CD8-positive, alpha-beta memory T cell (primary cell): ENCODE measurements at regions of chr11 and their contacts with region 1.

Region 1: DNA sequence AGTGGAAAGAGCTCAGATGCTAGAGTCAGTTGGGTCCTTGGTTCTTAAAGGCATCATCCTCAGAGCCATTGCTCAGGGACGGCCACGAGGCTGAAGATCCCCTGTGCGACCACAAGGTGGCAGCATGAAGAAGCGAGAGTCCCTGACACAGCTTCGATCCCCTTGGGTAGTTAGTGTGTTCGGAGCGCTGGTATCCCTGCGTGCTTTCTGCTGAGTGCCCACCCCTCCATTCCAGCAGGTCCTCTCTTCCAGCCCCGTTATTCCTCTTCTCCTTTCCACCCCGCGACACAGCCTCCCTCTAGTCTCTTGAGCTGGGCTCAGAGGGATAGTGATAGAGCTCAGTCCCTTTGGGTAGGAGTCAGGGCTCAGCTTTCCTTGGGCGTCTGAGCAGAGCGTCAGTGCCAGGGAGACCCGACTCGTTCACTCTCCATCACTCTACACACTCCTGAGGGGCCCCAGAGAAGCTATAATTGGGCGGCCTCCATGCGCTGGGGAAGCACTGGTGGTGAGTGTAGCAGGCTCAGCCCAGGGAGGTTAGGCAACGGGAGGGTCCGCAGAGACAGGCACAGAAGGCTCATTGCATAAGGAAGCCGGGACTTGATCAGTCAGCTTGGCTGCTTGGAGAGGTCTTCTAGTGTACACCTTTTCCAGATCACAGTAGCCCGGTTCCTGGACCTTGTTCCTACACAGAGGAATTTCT is at the start of gene OR51D1:
- DNase-seq: peak; percentile 39 to 79 (median 52)
- H3K4me3 ChIP-seq: no peak within 1 kb of the TSS
- H3K4me3 Mint-ChIP-seq: no peak within 1 kb of the TSS
- H3K27ac ChIP-seq: no peak within 1 kb of the TSS
- H3K27ac Mint-ChIP-seq: no peak within 1 kb of the TSS
- H3K4me1 ChIP-seq: no peaks in the 10 kb centered on the region
- H3K4me1 Mint-ChIP-seq: no peaks in the 10 kb centered on the region
- H3K27me3 ChIP-seq: no peaks in the 10 kb centered on the region
- H3K27me3 Mint-ChIP-seq: peaks cover 0 to 14% of the 10 kb centered on the region in 2 donors
- total RNA-seq, gene OR51D1: not detected

Region 2: GRCh38 chr11:4626207-4627099 is 10.7 kb before region 1 on chr11:
- CTCF ChIA-PET with region 1: interaction called, 10 read pairs
- POLR2A ChIA-PET with region 1: no interaction called
- DNase-seq: peak in 3 of 5 donors; percentile 12 to 64 (median 24)
- H3K4me3 ChIP-seq: no peak overlapping the region
- H3K4me3 Mint-ChIP-seq: no peak overlapping the region
- H3K27ac ChIP-seq: no peak overlapping the region
- H3K27ac Mint-ChIP-seq: no peak overlapping the region
- H3K4me1 ChIP-seq: no peaks in the 10 kb centered on the region
- H3K4me1 Mint-ChIP-seq: no peaks in the 10 kb centered on the region
- H3K27me3 ChIP-seq: no peaks in the 10 kb centered on the region
- H3K27me3 Mint-ChIP-seq: peaks cover 37 to 55% of the 10 kb centered on the region in 2 donors

Region 3: GRCh38 chr11:4647766-4648165 is 10.7 kb after region 1 on chr11:
- CTCF ChIA-PET with region 1: interaction called, 23 read pairs
- POLR2A ChIA-PET with region 1: no interaction called
- DNase-seq: no peak
- H3K4me3 ChIP-seq: no peak overlapping the region
- H3K4me3 Mint-ChIP-seq: no peak overlapping the region
- H3K27ac ChIP-seq: no peak overlapping the region
- H3K27ac Mint-ChIP-seq: no peak overlapping the region
- H3K4me1 ChIP-seq: no peaks in the 10 kb centered on the region
- H3K4me1 Mint-ChIP-seq: no peaks in the 10 kb centered on the region
- H3K27me3 ChIP-seq: no peaks in the 10 kb centered on the region
- H3K27me3 Mint-ChIP-seq: peaks cover 4 to 8% of the 10 kb centered on the region in 2 donors

Region 4: DNA sequence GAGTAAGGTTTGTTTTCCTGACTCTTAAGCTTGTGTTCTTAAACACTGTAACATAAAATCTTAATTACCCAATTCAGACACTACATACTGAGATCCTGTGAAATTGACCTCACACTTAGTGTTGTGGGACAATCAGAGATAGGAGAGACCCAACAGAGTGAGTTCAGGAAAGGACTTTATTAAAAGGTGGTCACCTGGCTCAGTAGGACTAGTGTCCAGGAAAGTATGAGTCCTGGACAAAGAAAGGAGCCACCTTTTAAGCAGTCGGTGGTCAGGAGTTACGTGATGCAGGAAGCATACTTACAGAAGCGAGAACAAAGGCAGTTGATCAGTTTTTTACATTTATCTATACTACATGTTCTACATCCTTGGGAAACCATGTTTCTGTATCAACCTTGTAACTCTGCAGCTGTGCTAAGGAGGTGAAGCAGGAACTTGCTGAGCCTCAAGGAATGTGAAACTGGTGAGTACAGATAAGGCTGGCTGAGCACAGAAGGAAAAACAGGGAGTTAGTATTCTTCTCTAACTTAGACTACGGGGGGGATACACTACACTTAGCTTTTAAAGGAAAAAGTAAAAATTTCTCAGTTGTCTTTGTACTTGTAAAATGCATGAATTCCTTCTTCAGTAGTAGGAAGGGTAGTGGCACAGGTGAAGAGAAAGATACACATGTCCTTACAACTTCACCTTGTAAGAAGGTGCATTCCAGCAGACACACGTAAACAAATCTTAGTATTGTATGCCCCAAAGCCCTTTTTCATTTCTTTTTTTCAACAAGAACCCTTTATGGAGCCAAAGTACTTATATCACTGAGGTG is 21.7 kb after region 1 on chr11:
- CTCF ChIA-PET with region 1: no interaction called
- POLR2A ChIA-PET with region 1: no interaction called
- DNase-seq: no peak
- H3K4me3 ChIP-seq: no peak overlapping the region
- H3K4me3 Mint-ChIP-seq: no peak overlapping the region
- H3K27ac ChIP-seq: no peak overlapping the region
- H3K27ac Mint-ChIP-seq: no peak overlapping the region
- H3K4me1 ChIP-seq: no peaks in the 10 kb centered on the region
- H3K4me1 Mint-ChIP-seq: no peaks in the 10 kb centered on the region
- H3K27me3 ChIP-seq: no peaks in the 10 kb centered on the region
- H3K27me3 Mint-ChIP-seq: peaks cover 12 to 15% of the 10 kb centered on the region in 2 donors

Region 5: DNA sequence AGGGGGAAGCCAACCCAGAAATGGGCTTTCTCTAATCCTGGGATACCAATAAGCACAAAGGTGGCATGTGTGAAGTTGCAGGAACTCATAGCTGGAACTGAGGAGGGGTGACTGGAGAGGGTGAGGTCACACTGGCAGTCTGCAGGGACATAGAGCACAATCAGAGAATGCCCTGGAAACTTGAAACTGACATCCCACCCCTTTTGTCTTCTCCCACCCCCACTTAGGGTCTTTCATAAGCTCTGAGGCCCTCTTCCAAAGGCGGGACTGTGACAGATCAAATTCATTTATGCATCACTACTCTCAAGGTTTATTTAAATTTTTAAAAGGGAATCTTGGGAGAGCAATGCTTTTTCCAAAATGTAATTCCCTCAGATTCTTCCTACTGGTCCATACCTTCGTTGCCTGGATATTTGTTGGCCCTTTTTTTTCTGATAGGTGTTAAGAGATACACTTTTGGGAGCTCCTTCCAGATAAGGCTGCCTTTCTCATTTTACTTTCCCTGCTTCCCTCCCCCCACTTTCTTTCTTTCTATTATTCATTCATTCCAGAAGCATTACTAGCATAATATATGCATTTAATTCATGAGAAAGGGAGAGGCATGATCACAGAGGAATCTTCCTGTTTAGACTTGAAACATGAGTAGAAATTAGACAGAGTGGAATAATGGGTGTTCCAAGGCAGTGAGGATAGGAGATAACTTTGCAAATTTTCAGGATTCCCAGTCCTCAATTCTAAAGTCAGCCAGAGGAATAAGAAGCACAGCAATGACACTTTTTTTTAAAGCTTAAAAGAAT is 45.7 kb after region 1 on chr11:
- CTCF ChIA-PET with region 1: no interaction called
- POLR2A ChIA-PET with region 1: no interaction called
- DNase-seq: no peak
- H3K4me3 ChIP-seq: no peak overlapping the region
- H3K4me3 Mint-ChIP-seq: no peak overlapping the region
- H3K27ac ChIP-seq: no peak overlapping the region
- H3K27ac Mint-ChIP-seq: no peak overlapping the region
- H3K4me1 ChIP-seq: no peaks in the 10 kb centered on the region
- H3K4me1 Mint-ChIP-seq: no peaks in the 10 kb centered on the region
- H3K27me3 ChIP-seq: no peaks in the 10 kb centered on the region
- H3K27me3 Mint-ChIP-seq: no peaks in the 10 kb centered on the region